ENCODE measurements at regions of chr14 and their contacts with region 1.

Region 1: DNA sequence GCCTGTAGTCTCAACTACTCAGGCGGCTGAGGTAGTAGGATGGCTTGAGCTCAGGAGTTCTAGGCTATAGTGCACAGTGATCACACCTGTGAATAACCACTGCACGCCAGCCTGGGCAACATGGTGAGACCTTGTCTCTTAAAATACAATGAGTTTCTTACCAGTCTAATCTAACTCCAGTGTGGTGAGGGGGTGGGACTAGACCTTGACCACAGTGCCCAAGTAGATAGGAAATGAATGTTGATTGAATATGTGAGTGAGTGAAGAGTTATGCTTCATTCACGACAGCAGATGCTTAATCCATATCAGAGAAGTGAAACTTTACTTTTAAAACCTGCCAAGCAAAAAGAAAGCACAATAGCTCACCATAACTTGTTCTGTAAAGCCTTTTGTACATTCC is 11.2 kb upstream of the AK7 start:
- DNase-seq: no peak
- H3K4me3 ChIP-seq: no peak overlapping the region
- H3K27ac ChIP-seq: no peak overlapping the region
- H3K4me1 ChIP-seq: peaks cover 0 to 7% (median 0%) of the 10 kb centered on the region in 4 experiments; a peak in 2 of 7 replicates
- H3K27me3 ChIP-seq: no peaks in the 10 kb centered on the region
- CTCF ChIP-seq: no peak
- EP300 ChIP-seq: no peak
- POLR2A ChIP-seq: no peak
- RAD21 ChIP-seq: no peak

Region 2: GRCh38 chr14:96215452-96216244 is 165.1 kb before region 1 on chr14:
- CTCF ChIA-PET with region 1: no interaction called
- POLR2A ChIA-PET with region 1: no interaction called
- DNase-seq: no peak
- H3K4me3 ChIP-seq: no peak overlapping the region
- H3K27ac ChIP-seq: no peak overlapping the region
- H3K4me1 ChIP-seq: no peaks in the 10 kb centered on the region
- H3K27me3 ChIP-seq: no peaks in the 10 kb centered on the region
- CTCF ChIP-seq: no peak
- EP300 ChIP-seq: no peak
- POLR2A ChIP-seq: no peak
- RAD21 ChIP-seq: no peak

Region 3: GRCh38 chr14:96297000-96297399 is 83.7 kb before region 1 on chr14:
- CTCF ChIA-PET with region 1: no interaction called
- POLR2A ChIA-PET with region 1: no interaction called
- DNase-seq: no peak
- H3K4me3 ChIP-seq: no peak overlapping the region
- H3K27ac ChIP-seq: no peak overlapping the region
- H3K4me1 ChIP-seq: no peaks in the 10 kb centered on the region
- H3K27me3 ChIP-seq: no peaks in the 10 kb centered on the region
- CTCF ChIP-seq: peak in 1 of 3 experiments; percentile 20; a peak in 2 of 4 replicates
- EP300 ChIP-seq: no peak
- POLR2A ChIP-seq: no peak
- RAD21 ChIP-seq: peak in 1 of 2 experiments; percentile 47; a peak in 3 of 4 replicates

Region 4: GRCh38 chr14:96391293-96392118 is 10.8 kb after region 1 on chr14:
- CTCF ChIA-PET with region 1: interaction called, 3 read pairs
- POLR2A ChIA-PET with region 1: interaction called, 18 read pairs
- DNase-seq: peak; percentile 86 to 100
- H3K4me3 ChIP-seq: peak overlapping the region; percentile 73 to 84 (median 84)
- H3K27ac ChIP-seq: 0 out of 2 replicates have a peak overlapping the region, but pooled peaks have one; percentile 17
- H3K4me1 ChIP-seq: peaks cover 0 to 4% (median 0%) of the 10 kb centered on the region in 4 experiments; a peak in 2 of 7 replicates
- H3K27me3 ChIP-seq: peaks cover 0 to 10% (median 7%) of the 10 kb centered on the region in 4 experiments; a peak in 5 of 7 replicates
- CTCF ChIP-seq: no peak
- EP300 ChIP-seq: no peak
- POLR2A ChIP-seq: peak; percentile 78 to 79
- RAD21 ChIP-seq: no peak